ENCODE measurements at regions of chr1 and their contacts with region 1.

Region 1: GRCh38 chr1:114467488-114467887 is 43.5 kb downstream of the TRIM33 start:
- DNase-seq: no peak
- ATAC-seq: no peak
- H3K4me3 Mint-ChIP-seq: no peak overlapping the region
- H3K27ac Mint-ChIP-seq: no peak overlapping the region
- H3K4me1 Mint-ChIP-seq: peaks cover 40% of the 10 kb centered on the region
- H3K27me3 Mint-ChIP-seq: no peaks in the 10 kb centered on the region
- CTCF ChIP-seq: no peak

Region 2: GRCh38 chr1:114192329-114192728 is 275.2 kb before region 1 on chr1:
- CTCF ChIA-PET with region 1: no interaction called
- POLR2A ChIA-PET with region 1: no interaction called
- intact Hi-C with region 1: no loop called
- DNase-seq: no peak
- ATAC-seq: no peak
- H3K4me3 Mint-ChIP-seq: no peak overlapping the region
- H3K27ac Mint-ChIP-seq: no peak overlapping the region
- H3K4me1 Mint-ChIP-seq: no peaks in the 10 kb centered on the region
- H3K27me3 Mint-ChIP-seq: peaks cover 45% of the 10 kb centered on the region
- CTCF ChIP-seq: no peak

Region 3: GRCh38 chr1:114263343-114263742 is 204.1 kb before region 1 on chr1:
- CTCF ChIA-PET with region 1: no interaction called
- POLR2A ChIA-PET with region 1: no interaction called
- intact Hi-C with region 1: no loop called
- DNase-seq: no peak
- ATAC-seq: no peak
- H3K4me3 Mint-ChIP-seq: no peak overlapping the region
- H3K27ac Mint-ChIP-seq: no peak overlapping the region
- H3K4me1 Mint-ChIP-seq: no peaks in the 10 kb centered on the region
- H3K27me3 Mint-ChIP-seq: peaks cover 8% of the 10 kb centered on the region
- CTCF ChIP-seq: no peak

Region 4: DNA sequence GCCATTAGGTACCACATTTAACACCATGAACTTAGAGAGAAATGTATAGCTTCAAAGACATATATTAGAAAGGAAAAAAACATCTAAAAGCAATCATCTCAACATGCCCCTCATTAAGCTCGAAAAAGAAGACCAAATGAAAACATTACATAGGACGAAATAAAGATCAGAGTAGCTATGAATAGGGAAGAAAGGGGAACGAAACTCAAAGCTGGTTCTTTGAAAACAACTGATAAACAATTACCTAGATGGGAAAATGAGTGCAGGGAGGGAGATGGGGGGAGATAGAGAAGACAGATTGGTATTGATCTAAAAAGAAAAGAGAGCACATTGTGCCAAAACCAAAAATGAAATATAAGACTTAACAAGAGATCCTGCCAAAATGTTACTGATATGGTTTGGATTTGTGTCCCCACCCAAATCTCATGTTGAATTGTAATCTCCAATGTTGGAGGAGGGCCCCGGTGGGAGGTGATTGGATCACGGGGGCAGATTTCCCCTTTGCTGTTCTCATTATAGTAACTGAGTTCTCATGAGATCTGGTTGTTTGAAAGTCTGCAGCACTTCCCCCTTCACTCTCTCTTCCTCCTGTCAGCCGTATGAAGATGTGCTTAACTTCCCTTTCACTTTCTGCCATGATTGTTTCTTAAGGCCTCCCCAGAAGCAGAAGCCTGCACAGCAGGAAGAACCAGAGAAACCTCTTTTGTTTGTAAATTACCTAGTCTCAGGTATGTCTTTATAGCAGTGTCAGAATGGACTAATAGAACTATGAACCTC is 14.9 kb after region 1 on chr1:
- CTCF ChIA-PET with region 1: no interaction called
- POLR2A ChIA-PET with region 1: no interaction called
- intact Hi-C with region 1: loop called (anchors 2 kb)
- DNase-seq: no peak
- ATAC-seq: peak; percentile 99
- H3K4me3 Mint-ChIP-seq: peak overlapping the region; percentile 72
- H3K27ac Mint-ChIP-seq: peak overlapping the region; percentile 91
- H3K4me1 Mint-ChIP-seq: peaks cover 54% of the 10 kb centered on the region
- H3K27me3 Mint-ChIP-seq: no peaks in the 10 kb centered on the region
- CTCF ChIP-seq: no peak

Region 5: GRCh38 chr1:114505148-114505561 is 37.7 kb after region 1 on chr1:
- CTCF ChIA-PET with region 1: no interaction called
- POLR2A ChIA-PET with region 1: no interaction called
- intact Hi-C with region 1: loop called (anchors 2 kb)
- DNase-seq: no peak
- ATAC-seq: peak; percentile 40
- H3K4me3 Mint-ChIP-seq: no peak overlapping the region
- H3K27ac Mint-ChIP-seq: no peak overlapping the region
- H3K4me1 Mint-ChIP-seq: peaks cover 53% of the 10 kb centered on the region
- H3K27me3 Mint-ChIP-seq: no peaks in the 10 kb centered on the region
- CTCF ChIP-seq: no peak